Left ventricle myocardium superior (tissue), 1 donor: ENCODE measurements at regions of chr16 and their contacts with region 1.

Region 1: DNA sequence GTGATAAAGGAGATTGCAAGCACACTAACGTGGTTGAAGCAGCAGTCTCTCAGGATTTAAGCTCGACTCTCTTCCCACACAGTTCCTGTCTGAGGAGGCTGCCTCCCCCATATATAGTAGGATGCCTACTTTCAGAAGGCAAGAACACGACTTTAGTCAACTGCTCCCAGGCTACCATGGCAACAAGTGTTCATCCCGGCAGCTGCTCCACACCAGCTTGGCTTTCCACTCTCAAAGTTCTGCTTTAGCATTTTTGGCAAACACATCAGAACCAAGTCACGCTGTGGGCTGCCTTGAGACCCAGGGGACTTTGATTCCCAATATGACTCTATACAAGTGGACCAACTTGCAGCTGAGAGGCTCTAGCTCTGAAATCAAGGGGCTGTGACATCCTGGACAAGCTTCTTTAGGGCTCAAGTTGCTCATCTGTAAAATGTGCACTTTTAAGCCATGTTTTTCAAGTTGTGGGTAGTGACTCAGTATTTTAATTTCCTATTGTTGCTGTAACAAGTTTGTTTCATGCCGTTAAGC is 16.5 kb downstream of the ZP2 start:
- DNase-seq: no peak
- ATAC-seq: no peak

Region 2: DNA sequence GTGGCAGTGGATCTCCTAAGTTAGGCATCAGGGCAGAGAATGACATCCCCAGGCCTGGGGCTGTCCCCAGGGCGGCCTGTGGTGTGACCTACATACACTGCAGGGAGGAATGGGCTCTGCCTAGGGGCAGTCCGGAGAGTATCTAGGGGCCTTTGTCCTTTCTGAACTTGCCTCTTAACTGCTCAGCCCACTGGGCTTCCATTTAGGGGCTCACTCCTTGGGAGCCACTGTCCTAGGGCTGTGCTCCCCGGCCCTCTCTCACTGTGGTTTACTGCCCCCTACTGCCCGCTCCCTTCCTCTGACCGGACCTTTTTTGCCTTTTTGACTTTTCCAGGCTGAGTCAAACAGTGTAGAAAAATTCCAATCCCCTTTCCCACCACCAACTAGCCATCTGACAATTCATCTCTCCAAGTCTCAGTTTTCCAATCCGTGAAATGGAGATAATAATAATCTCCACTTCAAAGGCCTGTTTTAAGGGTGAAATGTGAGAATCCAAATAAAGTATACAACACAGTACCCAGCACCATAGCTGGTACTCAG is 111.0 kb before region 1 on chr16:
- intact Hi-C with region 1: no loop called
- DNase-seq: peak; percentile 75
- ATAC-seq: peak; percentile 97

Region 3: GRCh38 chr16:21244518-21245215 is 49.8 kb after region 1 on chr16:
- intact Hi-C with region 1: no loop called
- DNase-seq: no peak
- ATAC-seq: no peak

Region 4: GRCh38 chr16:21300309-21301167 is 105.7 kb after region 1 on chr16:
- intact Hi-C with region 1: loop called (anchors 5 kb)
- DNase-seq: peak; percentile 82
- ATAC-seq: peak; percentile 94